ENCODE measurements at regions of chr16 and their contacts with region 1.

Region 1: DNA sequence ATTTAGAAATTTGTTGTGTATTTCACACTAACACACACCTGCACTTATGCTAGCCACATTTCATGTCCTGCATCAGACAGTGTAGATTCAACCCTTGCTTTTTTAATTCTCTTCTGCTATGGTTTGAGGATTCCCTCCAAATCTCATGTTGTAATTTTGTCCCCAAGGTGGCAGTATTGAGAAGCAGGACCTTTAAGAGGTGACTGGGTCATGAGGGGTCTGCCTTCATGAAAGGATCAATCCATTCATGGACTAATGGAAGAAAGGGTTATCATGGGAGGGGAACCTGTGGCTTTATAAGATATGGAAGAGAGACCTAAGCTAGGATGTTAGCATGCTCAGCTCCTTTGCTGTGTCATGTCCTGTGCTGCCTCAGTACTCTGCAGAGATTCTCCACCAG is 1032.2 kb downstream of the CDH11 start:
- DNase-seq: peak; percentile 78
- H3K4me3 ChIP-seq: no peak overlapping the region
- H3K27ac ChIP-seq: no peak overlapping the region
- H3K4me1 ChIP-seq: peaks cover 17% of the 10 kb centered on the region
- CTCF ChIP-seq: peak; percentile 88

Region 2: DNA sequence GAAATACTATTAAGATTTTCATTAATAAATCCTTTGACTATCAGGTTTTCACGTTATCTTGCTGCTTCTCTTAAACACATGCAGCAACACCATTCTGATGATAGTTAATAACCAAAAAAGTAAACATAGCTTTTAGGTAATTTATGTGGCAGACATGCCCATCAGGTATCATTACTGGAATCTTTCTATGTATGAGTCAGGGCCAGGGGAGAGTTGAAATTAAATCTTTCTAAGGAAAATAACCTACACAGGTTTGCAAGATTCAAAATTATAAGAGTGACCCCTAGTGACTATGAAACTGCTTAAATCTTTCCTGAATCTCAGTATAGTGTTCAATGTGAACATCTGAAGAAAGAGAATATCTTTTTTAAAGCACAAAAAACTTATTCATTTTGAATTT is 365.6 kb after region 1 on chr16:
- CTCF ChIA-PET with region 1: no interaction called
- POLR2A ChIA-PET with region 1: no interaction called
- intact Hi-C with region 1: loop called (anchors 1 kb)
- DNase-seq: peak; percentile 39
- H3K4me3 ChIP-seq: no peak overlapping the region
- H3K27ac ChIP-seq: no peak overlapping the region
- H3K4me1 ChIP-seq: peaks cover 13% of the 10 kb centered on the region
- CTCF ChIP-seq: peak; percentile 78

Measured in OCI-LY7 (cell line).